H1 (cell line): ENCODE measurements at regions of chr1 and their contacts with region 1.

Region 1: GRCh38 chr1:89843281-89844121 is 22.7 kb downstream of the LRRC8D start:
- DNase-seq: peak in 1 of 2 experiments; percentile 79
- H3K4me3 ChIP-seq: peak overlapping the region; percentile 46 to 74 (median 64)
- H3K27ac ChIP-seq: peak overlapping the region; percentile 72; the same call in 1 of the 2 replicates
- H3K4me1 ChIP-seq: peaks cover 2 to 15% (median 11%) of the 10 kb centered on the region in 4 experiments; a peak in 6 of 7 replicates
- H3K27me3 ChIP-seq: no peaks in the 10 kb centered on the region
- CTCF ChIP-seq: peak; percentile 51 to 69 (median 54); a peak in 3 of 4 replicates
- EP300 ChIP-seq: no peak
- POLR2A ChIP-seq: peak in 1 of 2 experiments; percentile 58; a peak in 2 of 3 replicates
- RAD21 ChIP-seq: peak; percentile 26 to 60; a peak in 3 of 4 replicates

Region 2: GRCh38 chr1:89739013-89739843 is 104.3 kb before region 1 on chr1:
- CTCF ChIA-PET with region 1: no interaction called
- POLR2A ChIA-PET with region 1: no interaction called
- DNase-seq: no peak
- H3K4me3 ChIP-seq: no peak overlapping the region
- H3K27ac ChIP-seq: no peak overlapping the region
- H3K4me1 ChIP-seq: no peaks in the 10 kb centered on the region
- H3K27me3 ChIP-seq: no peaks in the 10 kb centered on the region
- CTCF ChIP-seq: no peak
- EP300 ChIP-seq: no peak
- POLR2A ChIP-seq: no peak
- RAD21 ChIP-seq: no peak

Region 3: DNA sequence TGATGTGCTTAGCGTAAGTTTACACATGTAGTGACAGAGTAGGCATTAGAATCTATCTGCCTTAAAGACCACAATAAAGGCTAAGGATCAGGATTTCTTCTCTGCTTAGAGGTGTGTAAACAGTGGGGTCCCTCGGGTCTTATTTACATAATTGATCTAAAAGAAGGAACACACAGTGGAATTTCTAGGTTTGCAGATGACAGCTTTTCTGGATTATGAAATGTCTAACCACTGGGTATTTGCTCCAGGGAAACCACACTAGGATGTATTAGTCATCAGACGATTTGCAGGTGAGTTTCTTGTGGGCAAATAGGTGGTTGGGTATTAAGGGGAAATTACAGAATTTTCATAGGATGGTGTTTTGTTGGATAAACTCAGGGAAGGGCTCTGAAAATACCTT is 16.9 kb before region 1 on chr1:
- CTCF ChIA-PET with region 1: interaction called, 11 read pairs
- POLR2A ChIA-PET with region 1: interaction called, 30 read pairs
- DNase-seq: no peak
- H3K4me3 ChIP-seq: no peak overlapping the region
- H3K27ac ChIP-seq: no peak overlapping the region
- H3K4me1 ChIP-seq: peaks cover 3 to 6% (median 4%) of the 10 kb centered on the region in 4 experiments; a peak in 6 of 7 replicates
- H3K27me3 ChIP-seq: no peaks in the 10 kb centered on the region
- CTCF ChIP-seq: no peak
- EP300 ChIP-seq: no peak
- POLR2A ChIP-seq: no peak
- RAD21 ChIP-seq: no peak

Region 4: DNA sequence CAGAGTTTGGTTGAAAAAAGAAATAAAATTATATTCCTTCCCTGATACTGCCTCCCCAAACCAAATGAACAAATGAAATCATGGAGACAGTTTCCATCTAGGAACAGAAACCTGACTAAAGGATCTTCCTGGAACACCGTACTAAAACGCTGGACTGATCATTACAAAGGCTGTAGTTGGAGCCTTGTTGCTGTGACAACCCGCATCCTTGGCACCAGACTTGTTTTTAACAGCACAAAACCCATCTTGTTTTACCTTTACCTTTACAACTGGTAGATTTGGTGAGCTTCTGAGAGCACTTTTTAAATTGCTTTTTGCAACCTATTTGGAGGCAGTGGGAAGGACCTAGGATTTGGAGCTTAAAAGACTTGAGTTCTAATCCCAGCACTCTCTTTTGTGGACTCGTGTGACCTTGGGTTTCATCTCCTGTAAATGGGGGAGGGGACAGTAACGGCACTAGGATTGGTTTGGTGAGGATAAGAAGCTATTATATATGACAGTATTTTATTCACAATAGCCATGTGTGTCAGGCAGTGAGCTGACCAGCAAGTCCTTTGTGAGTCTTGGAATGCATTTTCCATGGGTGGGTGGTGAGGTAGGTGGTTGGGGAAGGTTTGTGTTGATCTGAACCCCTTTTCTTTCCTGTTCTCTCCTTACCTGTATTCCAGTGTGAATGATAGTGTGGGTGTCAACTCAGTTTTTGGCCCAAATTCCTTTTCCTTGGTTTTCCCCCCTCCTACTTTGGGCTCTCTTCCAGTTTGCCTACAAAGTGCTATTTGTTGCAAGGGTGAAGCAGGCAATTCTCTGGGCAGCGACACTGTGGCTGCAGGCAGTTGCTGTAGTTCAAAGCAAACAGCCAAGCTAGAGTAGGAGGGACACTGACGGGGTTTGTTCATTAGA is 10.1 kb before region 1 on chr1:
- CTCF ChIA-PET with region 1: interaction called, 5 read pairs
- POLR2A ChIA-PET with region 1: interaction called, 22 read pairs
- DNase-seq: no peak
- H3K4me3 ChIP-seq: no peak overlapping the region
- H3K27ac ChIP-seq: no peak overlapping the region
- H3K4me1 ChIP-seq: peaks cover 12 to 30% (median 20%) of the 10 kb centered on the region in 4 experiments
- H3K27me3 ChIP-seq: no peaks in the 10 kb centered on the region
- CTCF ChIP-seq: no peak
- EP300 ChIP-seq: no peak
- POLR2A ChIP-seq: no peak
- RAD21 ChIP-seq: no peak

Region 5: DNA sequence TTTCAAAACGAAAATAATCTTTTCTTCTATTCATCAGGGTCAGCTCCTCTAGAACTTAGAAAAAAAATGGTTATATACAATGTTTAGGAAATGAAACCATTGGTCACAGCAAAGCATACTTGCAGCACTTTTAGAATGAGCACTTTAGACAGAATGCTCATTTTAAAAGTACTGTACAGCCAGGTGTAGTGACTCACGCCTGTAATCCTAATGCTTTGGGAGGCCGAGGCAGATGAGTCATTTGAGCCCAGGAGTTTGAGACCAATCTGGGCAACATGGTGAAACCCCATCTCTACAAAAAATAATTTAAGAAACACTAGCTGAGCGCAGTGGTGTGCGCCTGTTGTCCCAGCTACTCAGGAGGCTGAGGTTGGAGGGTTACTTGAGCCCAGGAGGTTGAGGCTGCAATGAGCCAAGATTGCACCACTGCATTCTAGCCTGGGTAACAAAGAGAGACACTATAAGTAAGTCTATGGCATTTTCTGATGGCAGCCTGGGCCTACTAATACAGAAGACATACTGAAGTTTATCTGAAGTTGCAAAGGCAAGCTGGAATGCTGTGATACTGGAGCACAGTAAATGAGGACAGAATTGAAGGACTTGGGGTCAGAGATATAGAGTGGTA is 102.5 kb after region 1 on chr1:
- CTCF ChIA-PET with region 1: interaction called, 14 read pairs
- POLR2A ChIA-PET with region 1: interaction called, 4 read pairs
- DNase-seq: no peak
- H3K4me3 ChIP-seq: no peak overlapping the region
- H3K27ac ChIP-seq: no peak overlapping the region
- H3K4me1 ChIP-seq: peaks cover 3 to 14% (median 11%) of the 10 kb centered on the region in 4 experiments; a peak in 4 of 7 replicates
- H3K27me3 ChIP-seq: no peaks in the 10 kb centered on the region; a peak in 1 of 7 replicates
- CTCF ChIP-seq: no peak
- EP300 ChIP-seq: no peak
- POLR2A ChIP-seq: no peak
- RAD21 ChIP-seq: no peak